HEK293T (cell line): ENCODE measurements at regions of chr15 and their contacts with region 1.

Region 1: DNA sequence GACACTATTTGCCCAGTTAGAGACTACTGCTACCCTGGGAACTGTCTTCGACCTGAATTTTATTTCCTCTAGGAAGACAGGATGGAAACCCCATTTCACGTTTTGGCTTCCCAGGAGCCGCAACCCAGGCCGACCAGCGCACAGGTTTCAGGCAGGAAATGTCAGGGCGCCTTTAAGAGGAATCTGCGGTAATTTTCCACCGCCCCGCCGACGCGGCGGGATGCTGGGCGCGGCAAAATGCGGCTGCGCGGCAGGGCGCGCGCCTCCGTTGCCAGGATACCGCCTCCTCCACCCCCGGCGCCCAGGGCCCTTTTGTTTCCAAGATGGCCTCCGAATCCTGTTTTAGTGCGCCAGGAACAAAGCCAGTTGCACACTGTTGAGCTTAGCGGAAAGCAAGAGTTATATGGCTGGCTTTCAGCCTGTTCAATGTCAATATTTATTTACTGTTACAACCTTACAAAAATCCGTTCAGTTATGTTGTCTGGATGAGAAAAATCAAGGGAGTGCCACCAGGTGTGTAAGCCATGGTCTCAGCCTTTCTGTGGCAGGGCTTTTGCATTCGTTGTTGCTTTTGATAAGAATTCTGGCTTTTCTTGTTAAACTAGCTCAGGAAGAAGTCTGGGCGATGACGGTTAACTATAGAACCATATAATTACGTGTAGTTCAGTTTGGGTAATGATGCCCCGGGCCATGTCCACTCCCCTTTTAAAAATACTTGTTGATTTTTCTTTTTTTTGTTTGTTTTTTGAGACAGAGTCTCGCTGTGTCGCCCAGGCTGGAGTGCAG is 79.7 kb upstream of the CHD2 start:
- DNase-seq: peak; percentile 95

Region 2: DNA sequence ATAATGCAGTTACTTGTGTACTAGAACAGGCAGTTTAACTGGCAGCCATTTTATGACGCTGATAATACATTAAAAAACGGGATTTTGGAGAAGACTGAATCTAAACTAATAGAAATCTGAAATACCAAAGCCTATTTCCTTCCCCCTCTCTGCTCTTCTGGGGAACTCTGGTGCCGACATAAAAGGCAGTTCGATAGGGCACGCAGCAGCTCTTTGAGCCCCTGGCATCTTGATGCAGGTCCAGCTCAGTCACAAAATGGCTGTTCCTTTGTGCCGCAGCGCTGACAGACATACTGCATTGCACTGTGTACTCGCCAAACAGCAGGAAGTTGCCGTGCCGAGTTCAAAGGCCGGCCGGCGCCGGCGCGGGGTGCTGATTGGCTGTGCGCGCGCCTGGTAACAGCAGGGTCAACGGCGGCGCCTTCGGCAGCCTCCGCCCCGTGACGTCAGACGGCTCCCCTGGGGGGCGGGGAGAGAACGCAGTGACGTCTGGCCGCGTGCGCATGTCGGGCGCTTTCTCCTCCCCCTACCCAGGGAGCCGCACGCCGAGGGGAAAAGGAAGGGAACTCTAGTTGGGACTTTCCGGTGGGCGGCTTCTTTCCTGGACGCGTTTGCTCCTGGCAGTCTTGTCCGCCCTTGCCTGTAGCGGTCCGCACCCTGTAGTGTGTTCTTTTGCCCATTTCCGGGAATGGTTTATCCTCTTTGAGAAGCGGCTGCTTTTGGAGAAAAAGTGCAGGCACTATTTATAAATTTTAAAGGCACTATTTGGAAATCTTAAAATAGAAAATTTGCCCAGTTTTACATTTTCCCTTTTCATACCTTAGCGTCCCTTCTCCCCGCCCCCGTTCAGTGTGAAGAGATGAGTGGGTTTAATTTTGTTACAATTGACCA is 83.8 kb after region 1 on chr15:
- CTCF ChIA-PET with region 1: interaction called, 7 read pairs
- POLR2A ChIA-PET with region 1: interaction called, 19 read pairs
- DNase-seq: peak; percentile 92

Region 3: DNA sequence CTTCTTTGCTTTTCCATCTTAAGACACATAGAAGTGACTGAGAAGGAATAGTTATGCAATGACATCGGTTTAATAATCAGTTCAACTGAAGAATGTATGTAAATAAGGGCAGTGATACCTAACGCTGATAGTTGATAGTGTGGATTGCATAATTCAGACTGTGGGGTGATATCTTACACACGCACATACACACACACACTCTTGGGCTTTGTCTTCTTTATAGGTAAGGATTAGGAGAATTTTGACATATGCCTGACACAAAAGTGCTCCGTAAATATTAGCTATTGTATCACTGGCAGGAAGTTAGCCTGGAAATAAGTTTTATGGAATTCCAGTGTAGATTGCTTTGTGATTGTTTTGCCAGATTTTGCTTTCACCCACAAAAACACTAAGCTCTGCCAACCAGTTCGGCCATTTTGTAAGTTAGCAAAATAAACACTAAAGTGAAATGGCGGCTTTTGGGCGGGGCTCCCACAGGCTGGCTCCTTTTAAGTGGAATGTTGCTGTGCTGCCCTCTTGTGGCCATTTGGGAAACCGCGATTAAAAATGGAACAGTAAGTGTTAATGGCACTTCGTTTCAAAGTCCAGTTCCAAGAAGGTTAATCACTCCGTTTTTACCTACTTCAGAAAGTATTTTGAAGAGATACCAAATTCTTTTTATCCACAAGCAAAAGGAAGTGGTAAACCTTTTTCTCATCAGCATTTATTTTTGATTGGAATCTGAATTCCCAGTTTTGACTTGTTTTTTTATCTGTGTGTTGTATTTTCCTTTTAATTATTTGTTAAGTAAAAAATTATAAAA is 97.4 kb after region 1 on chr15:
- CTCF ChIA-PET with region 1: interaction called, 6 read pairs
- POLR2A ChIA-PET with region 1: interaction called, 13 read pairs
- DNase-seq: peak; percentile 77